ENCODE measurements at regions of chr9 and their contacts with region 1.

Region 1: GRCh38 chr9:137070201-137070905 is at the start of gene SAPCD2:
- DNase-seq: peak; percentile 86 to 91 (median 87)
- H3K4me3 ChIP-seq: peak within 1 kb of the TSS in 1 of 2 donors; percentile 57
- H3K4me3 Mint-ChIP-seq: peak within 1 kb of the TSS; percentile 59 to 86 (median 75)
- H3K27ac ChIP-seq: no peak within 1 kb of the TSS
- H3K27ac Mint-ChIP-seq: peak within 1 kb of the TSS in 5 of 7 donors; percentile 47 to 91 (median 82)
- H3K4me1 ChIP-seq: peaks cover 21% of the 10 kb centered on the region
- H3K4me1 Mint-ChIP-seq: peaks cover 4 to 17% (median 11%) of the 10 kb centered on the region in 4 donors
- H3K27me3 ChIP-seq: no peaks in the 10 kb centered on the region
- H3K27me3 Mint-ChIP-seq: peaks cover 0 to 4% of the 10 kb centered on the region in 2 donors
- total RNA-seq, gene SAPCD2: 0.09 to 0.11 TPM

Region 2: DNA sequence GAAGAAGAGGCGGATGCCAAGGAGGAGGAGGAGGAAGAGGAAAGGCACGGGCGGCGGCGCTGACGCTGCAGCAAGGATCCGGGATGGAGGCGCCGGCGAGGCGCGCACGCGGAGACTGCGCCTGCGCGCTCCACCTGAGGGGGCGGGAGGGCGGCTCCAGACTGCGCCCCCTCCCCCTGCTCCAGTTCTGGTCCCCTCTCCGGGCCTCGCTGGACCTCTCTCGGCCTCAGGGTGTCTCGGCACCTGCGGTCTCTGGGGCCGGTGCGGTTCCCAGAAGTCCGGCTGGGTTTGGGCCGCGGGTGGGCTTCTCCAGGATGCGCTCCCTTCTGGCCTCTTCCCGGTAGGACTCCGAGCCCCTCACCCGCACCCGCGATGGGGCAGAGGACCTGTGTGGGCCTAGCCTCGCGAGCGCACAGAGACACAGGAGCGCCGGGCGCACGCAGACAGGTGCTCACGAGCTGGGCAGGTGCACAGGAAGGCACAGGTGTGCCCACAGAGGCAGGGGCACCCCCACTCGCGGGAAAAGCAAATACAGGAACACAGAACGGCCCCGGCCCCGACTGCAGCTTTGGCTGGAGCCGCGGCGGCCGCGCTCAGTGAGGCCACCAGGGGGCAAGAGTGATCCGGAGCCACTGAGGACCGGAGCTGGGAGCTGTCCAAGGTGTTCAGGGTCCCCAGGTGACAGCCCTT is 24.1 kb before region 1 on chr9 and contains the start of gene NPDC1:
- CTCF ChIA-PET with region 1: interaction called, 58 read pairs
- POLR2A ChIA-PET with region 1: interaction called, 12 read pairs
- intact Hi-C with region 1: loop called (anchors 1 kb)
- DNase-seq: peak; percentile 72 to 79 (median 77)
- H3K4me3 ChIP-seq: peak within 1 kb of the TSS in 1 of 2 donors; percentile 72
- H3K4me3 Mint-ChIP-seq: peak within 1 kb of the TSS; percentile 72 to 88 (median 82)
- H3K27ac ChIP-seq: no peak within 1 kb of the TSS
- H3K27ac Mint-ChIP-seq: peak within 1 kb of the TSS in 3 of 7 donors; percentile 52 to 84 (median 53)
- H3K4me1 ChIP-seq: peaks cover 37% of the 10 kb centered on the region
- H3K4me1 Mint-ChIP-seq: peaks cover 3 to 22% (median 9%) of the 10 kb centered on the region in 4 donors
- H3K27me3 ChIP-seq: peaks cover 32% of the 10 kb centered on the region
- H3K27me3 Mint-ChIP-seq: peaks cover 15 to 19% of the 10 kb centered on the region in 2 donors
- total RNA-seq, gene NPDC1: 20.7 to 21.4 TPM

Region 3: DNA sequence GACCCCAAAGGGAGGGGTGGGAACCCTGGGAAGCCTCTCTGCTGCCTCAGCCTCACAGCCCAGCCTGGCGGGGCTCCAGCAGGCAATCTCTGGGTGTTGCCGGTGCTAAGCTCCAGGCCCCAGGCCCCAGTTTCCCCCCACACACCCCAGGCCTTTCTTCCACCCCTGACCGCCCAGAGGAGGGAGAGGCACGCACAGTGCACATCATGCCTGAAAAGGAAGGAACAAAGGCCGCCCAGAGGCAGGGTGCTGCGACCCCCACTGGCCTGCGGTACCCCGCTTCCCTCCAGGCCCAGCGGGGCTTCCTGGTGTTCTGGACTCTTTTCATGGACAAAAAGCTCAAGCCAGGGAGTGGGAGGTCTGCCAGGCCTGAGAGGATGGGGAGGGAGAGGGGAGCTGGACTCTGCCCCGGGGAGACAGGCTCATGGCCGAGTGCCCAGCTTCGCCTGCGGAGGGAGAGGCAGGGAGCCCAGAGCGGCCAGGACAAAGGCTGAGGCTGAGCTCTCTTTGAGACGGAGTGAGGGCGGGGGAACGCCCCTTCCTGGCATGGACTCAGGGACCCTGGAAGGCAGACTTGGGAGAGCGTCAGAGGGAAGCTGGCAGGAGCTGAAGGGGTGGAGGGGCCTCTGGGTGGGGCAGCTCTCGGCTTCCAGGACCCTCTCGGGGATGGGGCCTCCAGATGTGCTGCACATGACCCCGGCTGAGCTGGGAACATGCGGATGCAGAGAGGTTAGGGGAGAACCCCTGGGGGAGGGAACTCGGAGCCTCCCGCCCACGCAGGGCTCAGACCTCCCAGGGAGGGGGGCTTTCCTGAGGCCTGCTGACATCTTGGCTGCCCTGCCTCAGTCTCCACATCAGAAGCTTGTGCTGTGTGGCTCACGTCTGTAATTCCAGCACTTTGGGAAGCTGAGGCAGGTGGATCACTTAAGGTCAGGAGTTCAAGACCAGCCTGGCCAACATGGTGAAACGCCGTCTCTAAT is 14.7 kb before region 1 on chr9:
- CTCF ChIA-PET with region 1: interaction called, 12 read pairs
- POLR2A ChIA-PET with region 1: interaction called, 3 read pairs
- intact Hi-C with region 1: no loop called
- DNase-seq: peak in 1 of 5 donors; percentile 28
- H3K4me3 ChIP-seq: no peak overlapping the region
- H3K4me3 Mint-ChIP-seq: no peak overlapping the region
- H3K27ac ChIP-seq: no peak overlapping the region
- H3K27ac Mint-ChIP-seq: no peak overlapping the region
- H3K4me1 ChIP-seq: peaks cover 11% of the 10 kb centered on the region
- H3K4me1 Mint-ChIP-seq: no peaks in the 10 kb centered on the region
- H3K27me3 ChIP-seq: peaks cover 20% of the 10 kb centered on the region
- H3K27me3 Mint-ChIP-seq: peaks cover 1 to 2% of the 10 kb centered on the region in 2 donors

Region 4: DNA sequence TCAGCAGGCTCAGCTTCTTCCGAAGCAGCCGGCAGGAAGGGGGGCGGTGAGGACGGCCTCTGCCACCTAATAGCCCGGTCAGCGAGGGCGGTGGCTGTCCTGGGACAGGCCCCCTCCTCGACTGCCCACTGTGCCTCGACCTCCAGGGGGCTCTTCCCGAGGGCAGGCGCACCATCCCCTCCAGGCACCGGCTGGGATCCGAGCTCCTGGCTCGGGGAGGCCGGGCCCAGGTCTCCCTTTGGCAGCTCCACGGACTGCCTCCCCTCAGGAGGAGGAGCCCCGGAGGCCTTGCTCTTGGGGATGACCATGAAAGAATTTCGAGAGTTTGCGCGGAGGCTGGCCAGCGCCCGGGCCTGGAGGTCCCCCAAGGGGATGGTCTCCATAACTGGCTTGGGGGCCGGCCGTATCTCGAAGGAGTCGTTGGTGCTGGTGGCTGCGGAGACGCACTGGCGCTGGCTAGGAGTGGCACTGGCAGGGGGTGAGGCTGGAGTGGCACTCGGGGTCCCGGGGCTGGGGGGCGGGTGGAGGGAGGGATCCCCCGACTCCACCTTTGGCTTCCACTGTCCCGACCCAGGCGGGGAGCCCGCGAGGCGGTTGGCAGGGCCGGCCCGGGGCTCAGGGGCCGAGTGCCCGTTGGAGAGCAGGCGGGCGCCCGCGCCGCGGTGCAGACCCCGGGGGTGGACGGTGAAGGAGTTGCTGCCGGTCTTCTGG is 129.2 kb after region 1 on chr9:
- CTCF ChIA-PET with region 1: no interaction called
- POLR2A ChIA-PET with region 1: no interaction called
- intact Hi-C with region 1: no loop called
- DNase-seq: no peak
- H3K4me3 ChIP-seq: no peak overlapping the region
- H3K4me3 Mint-ChIP-seq: peak overlapping the region in 7 of 8 donors; percentile 62 to 81 (median 77)
- H3K27ac ChIP-seq: no peak overlapping the region
- H3K27ac Mint-ChIP-seq: peak overlapping the region in 1 of 7 donors; percentile 37
- H3K4me1 ChIP-seq: peaks cover 36% of the 10 kb centered on the region
- H3K4me1 Mint-ChIP-seq: peaks cover 9 to 27% (median 20%) of the 10 kb centered on the region in 4 donors
- H3K27me3 ChIP-seq: no peaks in the 10 kb centered on the region
- H3K27me3 Mint-ChIP-seq: no peaks in the 10 kb centered on the region